B cell (primary cell): ENCODE measurements at regions of chr14 and their contacts with region 1.

Region 1: GRCh38 chr14:71103662-71104484 is 196.6 kb downstream of the PCNX1 start:
- DNase-seq: peak; percentile 70
- ATAC-seq: peak; percentile 49
- H3K4me3 ChIP-seq: no peak overlapping the region
- H3K4me3 Mint-ChIP-seq: no peak overlapping the region
- H3K27ac ChIP-seq: no peak overlapping the region
- H3K27ac Mint-ChIP-seq: no peak overlapping the region
- H3K4me1 ChIP-seq: no peaks in the 10 kb centered on the region
- H3K4me1 Mint-ChIP-seq: peaks cover 2% of the 10 kb centered on the region
- H3K27me3 ChIP-seq: no peaks in the 10 kb centered on the region
- H3K27me3 Mint-ChIP-seq: no peaks in the 10 kb centered on the region
- CTCF ChIP-seq: peak; percentile 91

Region 2: GRCh38 chr14:71117839-71118743 is 14.2 kb after region 1 on chr14:
- CTCF ChIA-PET with region 1: interaction called, 30 read pairs
- POLR2A ChIA-PET with region 1: interaction called, 7 read pairs
- intact Hi-C with region 1: no loop called
- DNase-seq: no peak
- ATAC-seq: peak; percentile 37
- H3K4me3 ChIP-seq: no peak overlapping the region
- H3K4me3 Mint-ChIP-seq: no peak overlapping the region
- H3K27ac ChIP-seq: peak overlapping the region in 1 of 2 donors; percentile 78
- H3K27ac Mint-ChIP-seq: peak overlapping the region; percentile 78
- H3K4me1 ChIP-seq: peaks cover 22 to 24% of the 10 kb centered on the region in 2 donors
- H3K4me1 Mint-ChIP-seq: peaks cover 35% of the 10 kb centered on the region
- H3K27me3 ChIP-seq: no peaks in the 10 kb centered on the region
- H3K27me3 Mint-ChIP-seq: no peaks in the 10 kb centered on the region
- CTCF ChIP-seq: no peak